ENCODE measurements at regions of chr4 and their contacts with region 1.

Region 1: GRCh38 chr4:67575232-67575888 is 16.8 kb downstream of the STAP1 start:
- DNase-seq: peak in 2 of 5 donors; percentile 10 to 13
- H3K4me3 ChIP-seq: no peak overlapping the region
- H3K4me3 Mint-ChIP-seq: peak overlapping the region in 6 of 8 donors; percentile 6 to 78 (median 42)
- H3K27ac ChIP-seq: no peak overlapping the region
- H3K27ac Mint-ChIP-seq: peak overlapping the region in 5 of 7 donors; percentile 12 to 54 (median 44)
- H3K4me1 ChIP-seq: no peaks in the 10 kb centered on the region
- H3K4me1 Mint-ChIP-seq: peaks cover 17 to 34% (median 28%) of the 10 kb centered on the region in 4 donors
- H3K27me3 ChIP-seq: no peaks in the 10 kb centered on the region
- H3K27me3 Mint-ChIP-seq: no peaks in the 10 kb centered on the region

Region 2: DNA sequence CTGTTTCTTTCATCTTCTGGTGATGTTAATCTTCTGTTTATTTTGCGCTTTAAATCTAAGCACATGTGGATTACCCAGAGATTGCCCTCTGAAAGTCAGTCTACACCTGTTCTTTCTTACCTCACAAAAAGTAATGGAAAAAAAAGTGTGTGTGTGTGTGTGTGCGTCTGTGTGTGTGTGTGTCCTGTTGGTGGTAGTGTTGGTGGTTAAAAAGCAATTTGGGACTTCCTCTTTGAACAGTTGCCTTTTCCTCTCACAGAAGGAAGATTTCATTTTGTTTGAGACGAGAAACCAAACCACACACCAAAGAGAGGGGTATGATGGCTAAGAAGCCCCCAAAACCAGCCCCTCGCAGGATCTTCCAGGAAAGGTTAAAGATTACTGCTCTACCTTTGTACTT is 16.9 kb before region 1 on chr4 and contains the start of gene STAP1:
- CTCF ChIA-PET with region 1: interaction called, 3 read pairs
- POLR2A ChIA-PET with region 1: no interaction called
- intact Hi-C with region 1: loop called (anchors 2 kb)
- DNase-seq: peak; percentile 55 to 61 (median 57)
- H3K4me3 ChIP-seq: no peak within 1 kb of the TSS
- H3K4me3 Mint-ChIP-seq: peak within 1 kb of the TSS; percentile 75 to 92 (median 84)
- H3K27ac ChIP-seq: no peak within 1 kb of the TSS
- H3K27ac Mint-ChIP-seq: peak within 1 kb of the TSS; percentile 58 to 89 (median 78)
- H3K4me1 ChIP-seq: peaks cover 11% of the 10 kb centered on the region
- H3K4me1 Mint-ChIP-seq: peaks cover 5 to 31% (median 17%) of the 10 kb centered on the region in 4 donors
- H3K27me3 ChIP-seq: no peaks in the 10 kb centered on the region
- H3K27me3 Mint-ChIP-seq: peaks cover 0 to 2% of the 10 kb centered on the region in 2 donors
- total RNA-seq, gene STAP1: 3.6 to 3.9 TPM

Measured in CD4-positive, alpha-beta memory T cell (primary cell).